Left cardiac atrium (tissue), 4 donors: ENCODE measurements at regions of chr1 and their contacts with region 1.

Region 1: DNA sequence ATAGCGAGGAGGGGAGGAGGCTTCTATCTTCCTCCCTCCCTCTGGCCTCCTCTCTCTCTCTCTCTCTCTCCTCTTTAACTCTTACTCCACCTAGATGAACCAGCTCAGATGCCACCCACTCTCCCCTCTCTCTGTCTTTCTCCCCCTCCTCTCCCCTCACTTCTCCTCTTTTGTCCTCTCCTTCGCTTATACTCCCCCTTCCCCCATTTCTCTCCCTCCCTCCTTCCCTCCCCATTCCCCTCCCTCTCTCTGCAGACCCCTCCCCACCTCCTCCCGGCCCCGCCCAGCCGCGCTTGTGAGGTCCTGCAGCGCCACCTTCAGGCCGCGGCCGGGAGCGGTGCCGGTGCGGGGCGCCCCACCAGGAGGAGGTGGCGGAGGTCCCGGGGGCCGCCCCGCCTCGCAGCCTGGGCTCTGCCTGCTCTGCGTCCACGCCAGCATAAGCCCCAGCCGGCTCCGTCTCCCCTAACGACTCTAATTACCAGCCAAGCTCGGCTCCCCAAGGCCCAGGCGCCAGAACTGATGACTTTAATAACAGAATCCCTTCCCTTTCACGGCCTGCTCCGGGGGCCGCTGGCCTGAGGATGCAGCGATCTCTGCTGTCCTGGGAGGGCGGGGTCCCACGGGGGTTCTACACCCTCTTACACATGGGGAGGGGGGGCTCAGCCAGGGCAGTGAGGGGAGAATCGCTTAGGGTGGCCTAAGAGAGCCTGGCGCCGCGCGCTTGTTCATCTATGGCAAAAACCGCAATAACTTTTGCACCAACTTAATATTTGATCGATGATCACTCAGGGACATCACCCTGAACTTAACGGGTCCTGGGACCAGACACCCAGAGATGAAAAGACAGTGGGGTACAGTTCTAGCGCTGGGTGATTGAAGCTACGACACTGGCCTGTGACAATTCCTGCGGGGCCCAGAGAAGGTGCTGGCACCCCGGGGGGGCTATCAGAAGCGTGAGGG is 637.3 kb downstream of the MATN1 start:
- DNase-seq: peak; percentile 63
- ATAC-seq: peak; percentile 35 to 43

Region 2: DNA sequence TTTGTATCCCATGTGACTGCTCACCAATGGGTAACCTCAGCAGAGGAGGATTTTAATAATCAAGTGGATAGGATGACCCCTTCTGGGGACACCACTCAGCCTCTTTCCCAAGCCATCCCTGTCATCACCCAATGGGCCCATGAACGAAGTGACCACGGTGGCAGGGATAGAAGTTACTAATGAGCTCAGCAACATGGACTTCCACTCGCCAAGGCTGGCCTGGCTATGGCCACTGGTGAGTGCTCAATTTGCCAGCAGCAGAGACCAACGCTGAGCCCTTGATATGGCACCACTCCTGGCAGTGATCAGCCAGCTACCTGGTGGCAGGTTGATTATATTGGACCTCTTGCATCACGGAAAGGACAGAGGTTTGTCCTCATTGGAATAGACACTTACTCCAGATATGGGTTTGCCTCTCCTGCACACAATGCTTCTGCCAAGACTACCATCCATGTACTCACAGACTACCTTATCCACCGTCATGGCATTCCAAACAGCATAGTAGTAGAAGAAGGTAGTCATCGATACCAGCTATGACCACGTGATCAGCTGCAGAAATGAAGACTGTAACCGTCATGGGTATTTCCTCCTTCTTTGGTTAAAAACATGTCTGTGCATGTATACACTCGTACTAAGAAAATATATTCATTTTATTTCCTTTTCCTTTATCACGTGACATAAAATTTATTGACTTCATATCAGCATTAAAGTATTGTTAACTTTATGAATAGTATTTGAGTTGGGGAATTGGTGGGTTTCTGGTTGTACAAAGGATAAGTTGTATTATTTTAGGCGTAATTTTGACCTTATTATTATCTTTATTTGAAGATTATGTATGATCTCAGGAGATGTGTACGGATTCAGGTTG is 287.2 kb before region 1 on chr1:
- intact Hi-C with region 1: loop called in 1 of 2 experiments (anchors 5 kb)
- DNase-seq: no peak
- ATAC-seq: no peak

Region 3: GRCh38 chr1:29914936-29915335 is 171.2 kb before region 1 on chr1:
- intact Hi-C with region 1: loop called in 1 of 2 experiments (anchors 5 kb)
- DNase-seq: no peak
- ATAC-seq: no peak